ENCODE measurements at regions of chr1 and their contacts with region 1.

Region 1: GRCh38 chr1:25616095-25616986 is at the start of gene MAN1C1:
- DNase-seq: peak; percentile 95
- ATAC-seq: peak; percentile 92
- H3K4me3 Mint-ChIP-seq: peak within 1 kb of the TSS; percentile 76
- H3K27ac Mint-ChIP-seq: no peak within 1 kb of the TSS
- H3K4me1 Mint-ChIP-seq: peaks cover 28% of the 10 kb centered on the region
- H3K27me3 Mint-ChIP-seq: peaks cover 44% of the 10 kb centered on the region
- CTCF ChIP-seq: no peak
- total RNA-seq, gene MAN1C1: 10.4 to 16.8 TPM (median 12.2 TPM) in 3 replicates

Region 2: DNA sequence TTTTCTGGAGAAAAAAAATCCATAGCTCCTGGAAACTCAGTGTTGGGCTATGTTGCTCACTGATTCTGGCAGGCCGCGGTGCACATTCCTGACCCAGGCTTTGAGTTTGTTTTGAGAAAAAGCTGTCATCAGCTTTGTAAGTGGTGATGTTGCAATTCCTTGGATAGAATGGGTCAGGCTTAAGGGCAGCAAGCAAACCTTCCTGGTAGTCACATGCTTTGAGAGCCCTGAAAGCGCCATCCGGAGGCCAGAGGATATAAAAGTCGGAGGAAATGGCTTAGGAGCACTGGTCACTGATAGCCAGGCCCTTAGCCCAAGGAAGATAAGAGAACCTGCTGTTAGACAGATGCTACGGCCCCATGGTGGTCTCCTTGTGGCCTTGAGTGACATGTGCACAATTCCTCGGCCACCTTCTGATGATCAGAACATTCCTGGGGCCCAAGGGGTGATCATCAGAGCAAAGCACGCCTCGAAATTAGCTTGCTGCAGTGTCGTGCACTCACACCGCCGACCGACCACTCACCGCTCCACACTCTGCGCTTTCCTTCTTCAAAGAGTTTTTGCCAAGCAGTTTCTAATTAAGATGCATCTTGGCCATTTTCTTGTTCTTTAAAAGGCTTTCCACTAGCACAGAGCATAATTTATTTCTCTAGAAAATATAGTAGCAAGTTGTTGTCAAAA is 78.9 kb after region 1 on chr1:
- CTCF ChIA-PET with region 1: interaction called, 13 read pairs
- POLR2A ChIA-PET with region 1: no interaction called
- DNase-seq: peak; percentile 54
- ATAC-seq: peak; percentile 68
- H3K4me3 Mint-ChIP-seq: no peak overlapping the region
- H3K27ac Mint-ChIP-seq: peak overlapping the region; percentile 63
- H3K4me1 Mint-ChIP-seq: peaks cover 43% of the 10 kb centered on the region
- H3K27me3 Mint-ChIP-seq: no peaks in the 10 kb centered on the region
- CTCF ChIP-seq: no peak

Region 3: GRCh38 chr1:25704267-25704691 is 87.9 kb after region 1 on chr1:
- CTCF ChIA-PET with region 1: interaction called, 15 read pairs
- POLR2A ChIA-PET with region 1: no interaction called
- DNase-seq: no peak
- ATAC-seq: no peak
- H3K4me3 Mint-ChIP-seq: no peak overlapping the region
- H3K27ac Mint-ChIP-seq: peak overlapping the region; percentile 56; the same call in 1 of the 2 replicates
- H3K4me1 Mint-ChIP-seq: peaks cover 86% of the 10 kb centered on the region
- H3K27me3 Mint-ChIP-seq: no peaks in the 10 kb centered on the region; the same call in 1 of the 2 replicates
- CTCF ChIP-seq: no peak

Region 4: DNA sequence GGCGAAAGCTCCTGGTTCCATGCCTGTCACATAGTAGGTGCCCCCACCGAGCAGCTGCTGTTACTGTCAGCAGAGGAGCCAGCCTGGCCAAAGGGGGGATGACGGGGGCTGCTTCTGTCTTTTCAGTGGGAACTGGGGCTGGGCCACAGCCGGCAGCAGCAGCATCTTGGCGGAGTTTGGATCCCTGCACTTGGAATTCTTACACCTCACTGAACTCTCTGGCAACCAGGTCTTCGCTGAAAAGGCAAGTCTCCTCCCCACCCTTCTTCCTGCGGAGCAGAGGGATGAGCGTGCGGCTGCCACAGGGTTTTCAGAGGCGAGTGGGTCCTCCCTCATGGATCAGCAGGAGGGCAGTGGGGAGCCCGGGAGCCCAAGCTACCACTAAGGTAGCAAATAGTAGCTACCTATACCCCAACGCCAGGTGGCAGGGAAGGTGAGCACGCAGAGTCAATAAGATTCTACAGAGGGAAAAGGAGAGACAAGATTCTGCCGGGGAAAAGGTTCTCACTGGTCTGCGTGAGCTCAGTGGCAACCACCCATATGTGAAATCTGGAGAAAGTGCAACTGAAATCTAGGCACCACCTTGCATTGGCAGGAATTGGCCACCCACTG is 142.2 kb after region 1 on chr1:
- CTCF ChIA-PET with region 1: interaction called, 12 read pairs
- POLR2A ChIA-PET with region 1: interaction called, 4 read pairs
- DNase-seq: no peak
- ATAC-seq: peak; percentile 14; the same call in 1 of the 2 replicates
- H3K4me3 Mint-ChIP-seq: no peak overlapping the region
- H3K27ac Mint-ChIP-seq: no peak overlapping the region
- H3K4me1 Mint-ChIP-seq: peaks cover 29% of the 10 kb centered on the region
- H3K27me3 Mint-ChIP-seq: no peaks in the 10 kb centered on the region
- CTCF ChIP-seq: no peak

Region 5: DNA sequence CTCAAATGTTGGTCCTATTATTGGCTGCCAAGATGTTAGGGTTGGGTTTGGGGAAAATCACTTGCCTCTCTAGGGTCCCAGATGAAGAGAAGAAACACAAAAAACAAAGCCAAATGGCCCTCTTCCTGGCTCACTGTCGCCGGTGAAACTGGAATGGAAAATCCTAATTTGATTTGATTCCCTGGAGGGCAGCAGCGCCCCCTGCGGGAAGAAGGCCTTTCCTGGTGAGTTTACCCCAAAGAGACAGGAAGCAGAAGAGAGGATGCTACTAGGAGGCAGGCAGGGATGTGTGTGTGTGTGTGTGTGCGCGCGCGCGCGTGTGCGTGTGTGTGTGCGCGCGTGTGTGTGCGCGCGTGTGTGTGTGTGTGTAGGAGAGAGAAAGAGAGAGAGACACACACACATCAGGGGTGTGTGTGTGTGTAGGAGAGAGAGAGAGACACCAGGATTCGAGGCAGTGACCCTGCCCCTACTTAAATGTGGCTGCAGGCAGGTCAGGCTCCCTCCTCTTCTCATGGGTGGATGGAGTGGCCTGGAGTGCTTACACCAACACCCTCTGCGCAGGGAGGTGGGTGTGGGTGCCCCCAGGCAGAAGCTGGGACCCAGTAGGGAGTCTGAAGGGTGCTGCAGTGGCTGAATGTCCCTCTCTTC is 180.6 kb after region 1 on chr1:
- CTCF ChIA-PET with region 1: interaction called, 43 read pairs
- POLR2A ChIA-PET with region 1: interaction called, 3 read pairs
- DNase-seq: peak; percentile 95
- ATAC-seq: peak; percentile 27
- H3K4me3 Mint-ChIP-seq: no peak overlapping the region; the same call in 1 of the 2 replicates
- H3K27ac Mint-ChIP-seq: peak overlapping the region; percentile 29; the same call in 1 of the 2 replicates
- H3K4me1 Mint-ChIP-seq: peaks cover 30% of the 10 kb centered on the region
- H3K27me3 Mint-ChIP-seq: peaks cover 4% of the 10 kb centered on the region
- CTCF ChIP-seq: peak; percentile 77

Region 6: GRCh38 chr1:25810341-25811299 is 194.3 kb after region 1 on chr1:
- CTCF ChIA-PET with region 1: interaction called, 20 read pairs
- POLR2A ChIA-PET with region 1: interaction called, 3 read pairs
- DNase-seq: peak; percentile 96
- ATAC-seq: peak; percentile 81
- H3K4me3 Mint-ChIP-seq: no peak overlapping the region
- H3K27ac Mint-ChIP-seq: no peak overlapping the region
- H3K4me1 Mint-ChIP-seq: 0 out of 2 replicates have a peak, but pooled peaks cover 3% of the 10 kb centered on the region
- H3K27me3 Mint-ChIP-seq: no peaks in the 10 kb centered on the region
- CTCF ChIP-seq: peak; percentile 90